CD4-positive, alpha-beta memory T cell (primary cell): ENCODE measurements at regions of chr5 and their contacts with region 1.

Region 1: DNA sequence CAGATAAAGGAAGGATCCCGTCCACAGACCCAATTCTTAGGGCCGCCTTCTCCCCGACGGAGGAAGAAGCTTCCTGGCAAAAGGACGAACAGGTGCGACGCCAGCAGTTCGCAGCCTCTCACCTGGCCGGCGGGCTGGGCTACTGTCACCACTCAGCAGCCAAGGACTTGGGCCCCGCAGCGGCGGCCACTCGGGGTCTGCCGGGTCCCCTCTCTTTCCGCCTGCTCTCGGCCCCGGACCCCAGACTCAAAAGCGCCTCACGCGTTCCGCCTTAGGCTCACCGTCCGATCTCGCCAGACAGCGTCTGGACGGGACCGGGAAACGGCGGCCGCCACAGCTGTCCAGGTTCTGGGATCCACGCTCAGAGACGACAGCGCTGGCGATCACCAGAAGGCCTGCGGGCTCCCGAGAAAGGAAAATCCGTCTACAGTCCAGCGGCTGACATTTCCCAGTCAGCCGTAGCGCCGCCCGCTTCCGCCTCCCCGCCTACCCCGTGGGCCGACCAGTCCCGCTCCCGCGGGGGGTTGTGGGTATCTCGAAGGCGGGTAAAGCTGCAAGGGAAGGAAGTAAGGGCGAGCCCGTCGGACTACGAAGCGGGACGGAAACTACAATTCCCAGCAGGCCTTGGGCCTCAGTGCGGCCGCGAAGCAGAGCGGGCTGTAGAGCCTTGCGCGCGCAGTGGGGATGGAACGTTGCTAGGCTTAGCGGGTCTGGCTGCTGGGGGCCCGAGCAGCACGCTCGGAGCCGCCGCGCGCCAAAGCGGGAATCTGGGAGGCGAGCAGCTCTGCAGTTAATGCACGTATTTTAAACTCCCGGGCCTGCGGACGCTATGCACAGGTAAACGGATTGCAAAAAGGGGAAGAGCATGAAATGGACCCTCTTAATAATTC is at the starts of genes LMBRD2 and SKP2:
- DNase-seq: peak; percentile 95 to 99 (median 96)
- H3K4me3 ChIP-seq: peak within 1 kb of the TSS; percentile 77 to 90
- H3K4me3 Mint-ChIP-seq: peak within 1 kb of the TSS; percentile 93 to 98 (median 95)
- H3K27ac ChIP-seq: peak within 1 kb of the TSS; percentile 71
- H3K27ac Mint-ChIP-seq: peak within 1 kb of the TSS; percentile 79 to 98 (median 94)
- H3K4me1 ChIP-seq: peaks cover 58% of the 10 kb centered on the region
- H3K4me1 Mint-ChIP-seq: peaks cover 46 to 75% (median 60%) of the 10 kb centered on the region in 4 donors
- H3K27me3 ChIP-seq: no peaks in the 10 kb centered on the region
- H3K27me3 Mint-ChIP-seq: no peaks in the 10 kb centered on the region
- total RNA-seq, gene LMBRD2: 16.0 to 16.6 TPM
- total RNA-seq, gene SKP2: 21.0 to 23.9 TPM

Region 2: GRCh38 chr5:34838785-34839714 is 1312.6 kb before region 1 on chr5 and contains the start of gene TTC23L:
- CTCF ChIA-PET with region 1: no interaction called
- POLR2A ChIA-PET with region 1: interaction called, 3 read pairs
- intact Hi-C with region 1: loop called (anchors 5 kb)
- DNase-seq: peak; percentile 90 to 97 (median 91)
- H3K4me3 ChIP-seq: peak within 1 kb of the TSS; percentile 88 to 89
- H3K4me3 Mint-ChIP-seq: peak within 1 kb of the TSS; percentile 93 to 98 (median 95)
- H3K27ac ChIP-seq: peak within 1 kb of the TSS; percentile 70
- H3K27ac Mint-ChIP-seq: peak within 1 kb of the TSS; percentile 96 to 99 (median 98)
- H3K4me1 ChIP-seq: peaks cover 13% of the 10 kb centered on the region
- H3K4me1 Mint-ChIP-seq: peaks cover 4 to 16% (median 10%) of the 10 kb centered on the region in 4 donors
- H3K27me3 ChIP-seq: no peaks in the 10 kb centered on the region
- H3K27me3 Mint-ChIP-seq: peaks cover 0 to 2% of the 10 kb centered on the region in 2 donors
- total RNA-seq, gene TTC23L: 0.47 TPM in 1 of 2 experiments, not detected in the other

Region 3: GRCh38 chr5:34915139-34915855 is 1236.4 kb before region 1 on chr5 and contains the starts of genes BRIX1 and RAD1:
- CTCF ChIA-PET with region 1: no interaction called
- POLR2A ChIA-PET with region 1: interaction called, 4 read pairs
- intact Hi-C with region 1: loop called (anchors 1 kb)
- DNase-seq: peak; percentile 92 to 94 (median 94)
- H3K4me3 ChIP-seq: peak within 1 kb of the TSS; percentile 84 to 95
- H3K4me3 Mint-ChIP-seq: peak within 1 kb of the TSS in 4 of 8 donors; percentile 52 to 69 (median 66)
- H3K27ac ChIP-seq: peak within 1 kb of the TSS; percentile 75
- H3K27ac Mint-ChIP-seq: peak within 1 kb of the TSS in 2 of 7 donors; percentile 68 to 81
- H3K4me1 ChIP-seq: peaks cover 40% of the 10 kb centered on the region
- H3K4me1 Mint-ChIP-seq: peaks cover 19 to 37% (median 24%) of the 10 kb centered on the region in 4 donors
- H3K27me3 ChIP-seq: no peaks in the 10 kb centered on the region
- H3K27me3 Mint-ChIP-seq: no peaks in the 10 kb centered on the region
- total RNA-seq, gene BRIX1: 27.1 to 30.9 TPM
- total RNA-seq, gene RAD1: 22.7 to 26.3 TPM

Region 4: GRCh38 chr5:36029914-36030313 is 121.8 kb before region 1 on chr5:
- CTCF ChIA-PET with region 1: no interaction called
- POLR2A ChIA-PET with region 1: no interaction called
- intact Hi-C with region 1: no loop called
- DNase-seq: no peak
- H3K4me3 ChIP-seq: no peak overlapping the region
- H3K4me3 Mint-ChIP-seq: no peak overlapping the region
- H3K27ac ChIP-seq: no peak overlapping the region
- H3K27ac Mint-ChIP-seq: no peak overlapping the region
- H3K4me1 ChIP-seq: no peaks in the 10 kb centered on the region
- H3K4me1 Mint-ChIP-seq: no peaks in the 10 kb centered on the region
- H3K27me3 ChIP-seq: no peaks in the 10 kb centered on the region
- H3K27me3 Mint-ChIP-seq: peaks cover 5 to 26% of the 10 kb centered on the region in 2 donors

Region 5: DNA sequence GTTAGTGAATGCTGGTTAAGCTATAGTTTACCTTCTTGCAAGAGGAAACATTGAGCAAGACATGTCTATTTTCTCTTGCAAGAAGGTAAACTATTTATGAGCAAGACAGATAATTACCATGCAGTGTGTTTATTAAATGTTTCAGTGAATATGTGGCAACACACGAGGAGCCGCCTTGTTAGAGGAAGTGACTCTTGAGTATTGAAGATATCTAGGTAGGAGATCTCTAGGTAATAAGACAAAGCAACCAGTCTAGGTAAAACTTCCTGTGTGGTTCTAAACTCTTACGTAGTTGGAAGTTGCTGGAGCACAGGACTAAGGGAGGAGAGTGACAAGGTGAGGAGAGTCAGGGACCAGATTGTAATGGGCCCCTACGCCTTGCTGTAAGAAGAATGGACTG is 17.1 kb after region 1 on chr5:
- CTCF ChIA-PET with region 1: interaction called, 5 read pairs
- POLR2A ChIA-PET with region 1: interaction called, 11 read pairs
- intact Hi-C with region 1: no loop called
- DNase-seq: peak; percentile 25 to 55 (median 29)
- H3K4me3 ChIP-seq: no peak overlapping the region
- H3K4me3 Mint-ChIP-seq: peak overlapping the region in 4 of 8 donors; percentile 7 to 49 (median 30)
- H3K27ac ChIP-seq: no peak overlapping the region
- H3K27ac Mint-ChIP-seq: peak overlapping the region; percentile 72 to 89 (median 84)
- H3K4me1 ChIP-seq: peaks cover 14% of the 10 kb centered on the region
- H3K4me1 Mint-ChIP-seq: peaks cover 14 to 32% (median 18%) of the 10 kb centered on the region in 4 donors
- H3K27me3 ChIP-seq: no peaks in the 10 kb centered on the region
- H3K27me3 Mint-ChIP-seq: no peaks in the 10 kb centered on the region

Region 6: GRCh38 chr5:36875790-36876388 is 724.2 kb after region 1 on chr5:
- CTCF ChIA-PET with region 1: no interaction called
- POLR2A ChIA-PET with region 1: interaction called, 11 read pairs
- intact Hi-C with region 1: loop called (anchors 1 kb)
- DNase-seq: peak; percentile 74 to 80 (median 76)
- H3K4me3 ChIP-seq: peak overlapping the region; percentile 78 to 86
- H3K4me3 Mint-ChIP-seq: peak overlapping the region; percentile 89 to 99 (median 94)
- H3K27ac ChIP-seq: peak overlapping the region; percentile 93
- H3K27ac Mint-ChIP-seq: peak overlapping the region; percentile 92 to 97 (median 95)
- H3K4me1 ChIP-seq: peaks cover 62% of the 10 kb centered on the region
- H3K4me1 Mint-ChIP-seq: peaks cover 29 to 58% (median 38%) of the 10 kb centered on the region in 4 donors
- H3K27me3 ChIP-seq: no peaks in the 10 kb centered on the region
- H3K27me3 Mint-ChIP-seq: no peaks in the 10 kb centered on the region